PC-9 (cell line): ENCODE measurements at regions of chr6 and their contacts with region 1.

Region 1: GRCh38 chr6:84466511-84466910 is 239.1 kb upstream of the CEP162 start:
- DNase-seq: peak; percentile 69 to 89
- H3K4me3 ChIP-seq: peak overlapping the region; percentile 33; the same call in 1 of the 2 replicates
- H3K27ac ChIP-seq: peak overlapping the region; percentile 75
- H3K4me1 ChIP-seq: peaks cover 31% of the 10 kb centered on the region
- H3K27me3 ChIP-seq: no peaks in the 10 kb centered on the region
- CTCF ChIP-seq: no peak

Region 2: GRCh38 chr6:84645000-84645399 is 178.5 kb after region 1 on chr6:
- CTCF ChIA-PET with region 1: no interaction called
- POLR2A ChIA-PET with region 1: no interaction called
- intact Hi-C with region 1: loop called (anchors 5 kb)
- DNase-seq: peak in 1 of 2 experiments; percentile 87
- H3K4me3 ChIP-seq: no peak overlapping the region
- H3K27ac ChIP-seq: peak overlapping the region; percentile 71
- H3K4me1 ChIP-seq: peaks cover 41% of the 10 kb centered on the region
- H3K27me3 ChIP-seq: no peaks in the 10 kb centered on the region
- CTCF ChIP-seq: no peak

Region 3: DNA sequence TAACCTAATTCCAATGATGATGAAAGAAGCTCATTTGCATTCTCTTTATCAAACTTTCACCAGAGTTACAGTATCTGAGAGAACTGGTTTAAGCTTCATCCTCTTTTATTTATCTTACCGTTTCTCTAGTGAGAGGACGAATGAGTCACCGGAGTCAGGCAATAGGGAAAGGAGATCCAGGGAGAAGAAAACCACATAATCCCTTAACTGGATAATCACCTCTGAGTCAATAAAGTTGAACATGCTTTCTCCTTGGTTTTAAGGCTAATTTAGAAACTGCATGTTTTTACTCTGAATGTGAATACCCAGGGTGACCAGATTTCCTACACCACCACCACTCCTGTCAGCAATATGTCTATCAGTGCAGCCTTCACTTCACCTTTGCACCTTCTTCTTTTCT is 611.6 kb after region 1 on chr6:
- CTCF ChIA-PET with region 1: no interaction called
- POLR2A ChIA-PET with region 1: no interaction called
- intact Hi-C with region 1: no loop called
- DNase-seq: peak; percentile 15 to 76
- H3K4me3 ChIP-seq: no peak overlapping the region
- H3K27ac ChIP-seq: peak overlapping the region; percentile 37; the same call in 1 of the 2 replicates
- H3K4me1 ChIP-seq: peaks cover 13% of the 10 kb centered on the region
- H3K27me3 ChIP-seq: no peaks in the 10 kb centered on the region
- CTCF ChIP-seq: no peak